Panc1 (cell line): ENCODE measurements at regions of chr12 and their contacts with region 1.

Region 1: GRCh38 chr12:6533923-6534694 is at the start of gene GAPDH:
- DNase-seq: peak; percentile 75
- ATAC-seq: peak; percentile 62
- H3K4me3 ChIP-seq: peak within 1 kb of the TSS; percentile 77 to 86
- H3K27ac ChIP-seq: peak within 1 kb of the TSS; percentile 95
- H3K4me1 ChIP-seq: peaks cover 44% of the 10 kb centered on the region
- H3K27me3 ChIP-seq: no peaks in the 10 kb centered on the region
- CTCF ChIP-seq: no peak
- total RNA-seq, gene GAPDH: 2,912 TPM

Region 2: GRCh38 chr12:6211421-6211869 is 322.7 kb before region 1 on chr12:
- CTCF ChIA-PET with region 1: no interaction called
- POLR2A ChIA-PET with region 1: interaction called, 16 read pairs
- in situ Hi-C with region 1: no loop called
- intact Hi-C with region 1: no loop called
- DNase-seq: no peak
- ATAC-seq: no peak
- H3K4me3 ChIP-seq: no peak overlapping the region
- H3K27ac ChIP-seq: no peak overlapping the region
- H3K4me1 ChIP-seq: peaks cover 27% of the 10 kb centered on the region
- H3K27me3 ChIP-seq: no peaks in the 10 kb centered on the region
- CTCF ChIP-seq: no peak

Region 3: DNA sequence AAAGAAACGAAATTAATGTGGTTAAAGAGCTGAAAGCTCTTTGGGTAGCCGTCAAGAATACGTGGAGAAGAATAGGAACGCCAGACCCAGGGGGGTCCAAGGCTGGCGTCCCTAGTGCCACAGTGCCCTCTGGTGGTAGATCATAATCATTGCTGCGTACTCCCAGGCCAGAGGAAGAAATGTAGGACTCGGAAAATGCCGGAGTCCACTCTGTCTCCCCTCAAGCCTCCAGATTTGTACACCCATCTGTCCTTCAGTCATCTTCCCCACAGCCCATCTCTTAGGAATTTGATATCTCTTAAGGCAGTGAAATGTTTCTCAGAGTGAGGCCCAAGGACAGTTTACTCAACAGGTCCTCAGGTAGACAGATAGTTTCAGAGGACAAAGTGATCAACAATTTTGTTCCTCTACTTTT is 249.0 kb before region 1 on chr12:
- CTCF ChIA-PET with region 1: no interaction called
- POLR2A ChIA-PET with region 1: interaction called, 15 read pairs
- in situ Hi-C with region 1: no loop called
- intact Hi-C with region 1: no loop called
- DNase-seq: no peak
- ATAC-seq: peak; percentile 79
- H3K4me3 ChIP-seq: no peak overlapping the region
- H3K27ac ChIP-seq: peak overlapping the region; percentile 63; the same call in 1 of the 2 replicates
- H3K4me1 ChIP-seq: peaks cover 11% of the 10 kb centered on the region
- H3K27me3 ChIP-seq: no peaks in the 10 kb centered on the region
- CTCF ChIP-seq: peak; percentile 87

Region 4: DNA sequence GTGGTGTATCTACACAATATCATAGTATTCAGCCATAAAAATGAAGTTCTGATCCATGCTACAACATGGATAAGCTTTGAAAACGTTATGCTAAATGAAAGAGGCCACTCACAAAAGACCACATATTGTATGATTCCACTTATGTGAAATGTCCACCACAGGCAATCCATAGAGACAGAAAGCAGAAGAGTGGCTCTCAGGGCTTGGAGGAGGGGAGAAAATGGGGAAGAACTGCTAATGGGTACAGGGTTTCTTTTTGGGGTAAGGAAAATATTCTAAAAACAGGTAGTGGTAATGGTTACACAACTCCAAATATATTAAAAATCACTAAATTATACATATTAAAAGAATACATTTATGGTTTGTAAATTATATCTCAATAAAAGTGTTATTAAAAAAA is 175.2 kb before region 1 on chr12:
- CTCF ChIA-PET with region 1: no interaction called
- POLR2A ChIA-PET with region 1: interaction called, 11 read pairs
- in situ Hi-C with region 1: no loop called
- intact Hi-C with region 1: no loop called
- DNase-seq: no peak
- ATAC-seq: no peak
- H3K4me3 ChIP-seq: no peak overlapping the region
- H3K27ac ChIP-seq: no peak overlapping the region
- H3K4me1 ChIP-seq: peaks cover 6% of the 10 kb centered on the region
- H3K27me3 ChIP-seq: no peaks in the 10 kb centered on the region
- CTCF ChIP-seq: no peak

Region 5: DNA sequence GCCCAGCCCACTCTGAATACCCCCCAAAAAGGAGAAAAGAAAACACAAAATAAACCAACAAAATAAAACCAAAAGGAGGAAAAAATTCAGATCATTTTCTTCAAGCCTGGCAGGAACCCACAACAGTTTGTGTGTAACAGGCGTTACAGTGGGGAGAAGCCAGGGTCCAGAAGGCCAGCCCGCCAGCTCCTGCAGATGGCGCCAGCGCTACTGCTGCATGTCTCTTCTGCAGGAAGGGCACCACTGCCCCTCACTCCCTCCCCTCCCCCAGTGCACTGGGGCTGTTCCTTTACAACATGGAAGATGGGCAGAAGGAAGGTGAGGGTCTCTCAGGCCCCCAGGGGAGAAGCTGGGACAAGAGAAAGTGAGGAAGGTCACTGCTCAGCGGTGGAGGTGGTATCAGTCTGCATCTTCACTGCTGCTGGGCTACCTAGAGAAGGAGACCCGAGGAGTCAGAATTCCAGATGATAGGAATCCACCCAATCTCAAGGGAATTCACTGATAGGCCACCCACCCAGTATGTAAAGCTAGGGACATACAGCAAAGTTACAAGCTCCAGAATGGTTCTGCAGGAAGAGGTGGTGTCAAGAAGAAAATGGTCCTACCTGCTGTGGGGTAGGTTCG is 36.3 kb after region 1 on chr12:
- CTCF ChIA-PET with region 1: no interaction called
- POLR2A ChIA-PET with region 1: no interaction called
- in situ Hi-C with region 1: no loop called
- intact Hi-C with region 1: no loop called
- DNase-seq: no peak
- ATAC-seq: 0 out of 2 replicates have a peak, but pooled peaks have one; percentile 47
- H3K4me3 ChIP-seq: no peak overlapping the region
- H3K27ac ChIP-seq: no peak overlapping the region
- H3K4me1 ChIP-seq: peaks cover 11% of the 10 kb centered on the region
- H3K27me3 ChIP-seq: no peaks in the 10 kb centered on the region
- CTCF ChIP-seq: peak; percentile 85